Prostate gland (tissue), 2 donors: ENCODE measurements at regions of chrX and their contacts with region 1.

Region 1: GRCh38 chrX:51144852-51145442 is 187.7 kb upstream of the NUDT10 start:
- DNase-seq: peak; percentile 19
- H3K4me3 ChIP-seq: no peak overlapping the region
- H3K27ac ChIP-seq: no peak overlapping the region
- H3K4me1 ChIP-seq: no peaks in the 10 kb centered on the region
- H3K27me3 ChIP-seq: no peaks in the 10 kb centered on the region
- CTCF ChIP-seq: peak in 3 of 4 experiments; percentile 18 to 34 (median 28)
- POLR2A ChIP-seq: no peak

Region 2: DNA sequence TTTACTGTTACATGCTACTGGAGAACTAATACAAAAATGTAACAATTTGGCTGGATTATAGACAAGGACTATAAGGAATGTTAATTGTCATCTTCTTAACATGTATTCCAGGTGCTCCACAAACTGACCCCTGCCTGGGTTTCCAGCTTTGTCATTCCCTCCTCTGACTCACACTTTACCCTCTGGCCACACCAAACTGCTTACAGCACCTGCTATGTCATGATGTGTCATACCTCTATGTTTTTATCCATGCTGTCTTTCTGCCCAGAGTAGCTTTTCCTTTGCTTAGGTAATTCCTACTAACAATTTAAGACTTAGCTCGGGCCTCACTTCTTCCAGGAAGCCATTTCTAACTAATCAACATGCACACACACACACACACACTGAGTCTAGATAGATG is 317.0 kb before region 1 on chrX:
- intact Hi-C with region 1: no loop called
- DNase-seq: no peak
- H3K4me3 ChIP-seq: no peak overlapping the region
- H3K27ac ChIP-seq: no peak overlapping the region
- H3K4me1 ChIP-seq: no peaks in the 10 kb centered on the region
- H3K27me3 ChIP-seq: no peaks in the 10 kb centered on the region
- CTCF ChIP-seq: no peak
- POLR2A ChIP-seq: no peak

Region 3: DNA sequence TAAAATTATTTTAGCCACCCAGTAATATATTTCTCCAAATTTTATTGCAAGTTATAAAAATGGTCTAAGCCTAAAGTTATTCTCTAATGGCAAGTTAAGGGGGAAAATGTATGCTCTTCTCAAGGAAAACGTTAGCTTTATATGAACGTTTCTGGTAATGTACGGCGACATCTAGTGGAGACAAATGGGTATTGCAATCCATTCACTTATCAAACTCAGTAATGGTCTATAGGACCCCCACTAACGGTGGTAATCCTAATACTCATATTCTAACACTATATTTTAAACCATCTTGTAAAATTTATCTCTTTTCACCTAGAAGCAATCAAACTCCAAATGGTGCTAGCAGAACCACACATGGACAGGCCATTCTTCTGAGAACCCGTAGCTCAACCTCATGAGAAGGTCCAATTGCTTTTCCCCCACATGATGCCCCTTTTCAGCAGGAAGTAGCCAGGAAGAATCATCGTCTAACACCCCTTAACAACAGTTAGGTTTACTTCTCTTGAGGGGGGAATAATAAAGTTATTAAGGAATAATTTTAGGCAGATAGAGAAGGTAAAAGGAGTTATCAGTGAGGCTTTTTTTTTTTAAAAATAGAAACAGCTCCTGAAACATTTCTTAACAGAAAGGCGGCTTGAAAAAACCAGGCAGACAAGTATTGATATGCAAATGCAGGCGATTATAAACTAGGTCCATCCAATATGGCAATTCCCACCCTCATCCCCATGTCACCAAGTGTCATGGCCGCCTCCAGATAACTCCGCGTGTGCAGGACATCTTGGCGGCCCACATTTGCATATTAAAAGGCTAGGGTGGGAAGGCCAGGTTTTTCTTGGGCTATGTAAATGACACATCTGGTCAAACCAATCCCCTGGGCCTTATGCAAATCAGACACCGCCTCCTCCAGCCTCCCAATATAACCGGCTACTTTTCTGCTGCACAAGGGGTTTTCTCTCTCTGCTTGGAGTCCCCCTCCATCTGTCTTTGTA is 316.4 kb after region 1 on chrX:
- intact Hi-C with region 1: loop called (anchors 5 kb)
- DNase-seq: no peak
- H3K4me3 ChIP-seq: no peak overlapping the region
- H3K27ac ChIP-seq: no peak overlapping the region
- H3K4me1 ChIP-seq: no peaks in the 10 kb centered on the region
- H3K27me3 ChIP-seq: no peaks in the 10 kb centered on the region
- CTCF ChIP-seq: peak; percentile 49 to 61 (median 52)
- POLR2A ChIP-seq: no peak